T-cell (primary cell): ENCODE measurements at regions of chr2 and their contacts with region 1.

Region 1: DNA sequence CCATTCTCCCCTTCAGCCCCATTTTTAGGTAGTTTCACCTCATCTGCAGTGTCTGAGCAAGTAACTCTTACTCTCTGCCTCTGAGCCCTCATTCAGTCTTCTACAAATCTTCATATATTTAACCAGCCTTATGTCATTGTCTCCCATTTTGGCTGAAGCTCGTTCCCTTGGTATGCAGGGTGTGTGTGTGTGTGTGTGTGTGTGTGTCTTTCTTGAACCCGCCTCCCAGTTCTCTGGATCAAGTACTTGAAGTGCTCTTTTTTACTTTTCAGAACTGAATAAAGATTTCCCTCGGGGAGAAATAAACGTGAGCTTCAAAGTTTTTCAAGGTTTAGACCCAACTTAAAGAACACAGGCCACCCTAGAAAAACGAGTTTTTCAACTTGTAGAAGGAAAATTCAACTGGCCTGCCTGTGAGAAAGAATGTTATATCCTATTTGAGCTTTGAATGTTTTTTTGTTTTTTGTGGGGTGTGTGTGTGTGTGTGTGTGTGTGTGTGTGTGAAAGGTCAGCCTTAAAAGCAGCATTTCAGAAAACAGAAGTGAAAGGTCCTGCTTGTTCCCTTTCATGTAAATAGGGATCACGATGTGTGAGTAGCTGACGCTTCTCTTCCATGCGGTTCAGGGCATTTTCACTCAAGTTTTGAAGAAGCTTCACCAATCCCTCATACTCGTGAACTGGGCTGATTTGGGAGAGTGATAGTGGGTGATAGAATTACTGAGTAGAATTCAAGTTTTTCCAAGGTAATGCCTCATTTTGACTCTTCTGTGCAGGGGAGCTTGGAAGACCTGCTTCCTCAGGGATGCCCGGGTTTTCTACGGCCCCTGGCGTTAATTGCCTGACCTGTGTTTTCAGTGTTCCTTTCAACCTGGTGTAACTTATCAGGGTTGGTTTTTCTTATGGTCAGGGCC is 50.6 kb upstream of the EML6 start:
- DNase-seq: no peak
- ATAC-seq: no peak
- H3K4me3 ChIP-seq: no peak overlapping the region
- H3K4me3 Mint-ChIP-seq: peak overlapping the region in 1 of 3 donors; percentile 22
- H3K27ac ChIP-seq: no peak overlapping the region
- H3K27ac Mint-ChIP-seq: no peak overlapping the region
- H3K4me1 ChIP-seq: peaks cover 3 to 9% of the 10 kb centered on the region in 2 experiments
- H3K4me1 Mint-ChIP-seq: peaks cover 18 to 22% (median 18%) of the 10 kb centered on the region in 3 donors
- H3K27me3 ChIP-seq: peaks cover 0 to 9% of the 10 kb centered on the region in 2 experiments
- H3K27me3 Mint-ChIP-seq: no peaks in the 10 kb centered on the region

Region 2: GRCh38 chr2:54558188-54559005 is 114.4 kb before region 1 on chr2:
- CTCF ChIA-PET with region 1: no interaction called
- POLR2A ChIA-PET with region 1: interaction called in 1 of 2 experiments, 12 read pairs
- DNase-seq: peak; percentile 32 to 82 (median 65)
- ATAC-seq: peak; percentile 68 to 72 (median 72)
- H3K4me3 ChIP-seq: peak overlapping the region; percentile 77 to 88
- H3K4me3 Mint-ChIP-seq: peak overlapping the region; percentile 93 to 98 (median 95)
- H3K27ac ChIP-seq: peak overlapping the region; percentile 84
- H3K27ac Mint-ChIP-seq: peak overlapping the region; percentile 91
- H3K4me1 ChIP-seq: peaks cover 29% of the 10 kb centered on the region in 2 experiments
- H3K4me1 Mint-ChIP-seq: peaks cover 46 to 72% (median 56%) of the 10 kb centered on the region in 3 donors
- H3K27me3 ChIP-seq: no peaks in the 10 kb centered on the region
- H3K27me3 Mint-ChIP-seq: no peaks in the 10 kb centered on the region

Region 3: DNA sequence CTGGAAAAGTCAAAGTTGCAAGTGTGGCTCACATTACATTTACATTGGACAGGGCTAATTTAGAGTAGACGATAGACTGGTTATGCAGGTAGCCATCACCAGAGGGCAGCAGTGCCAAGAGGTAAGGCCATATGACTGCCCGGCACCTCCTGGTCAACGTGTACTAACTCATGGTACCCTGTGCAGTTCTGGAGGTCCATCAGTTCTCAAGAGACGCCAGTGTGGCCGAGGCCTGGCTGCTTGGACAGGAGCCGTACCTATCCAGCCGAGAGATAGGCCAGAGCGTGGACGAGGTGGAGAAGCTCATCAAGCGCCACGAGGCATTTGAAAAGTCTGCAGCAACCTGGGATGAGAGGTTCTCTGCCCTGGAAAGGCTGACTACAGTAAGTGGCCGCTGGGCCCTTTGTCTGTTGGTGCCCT is 15.2 kb before region 1 on chr2:
- CTCF ChIA-PET with region 1: no interaction called
- POLR2A ChIA-PET with region 1: no interaction called
- DNase-seq: peak in 10 of 35 experiments; percentile 8 to 41 (median 14)
- ATAC-seq: peak in 1 of 4 experiments; percentile 51
- H3K4me3 ChIP-seq: no peak overlapping the region
- H3K4me3 Mint-ChIP-seq: no peak overlapping the region
- H3K27ac ChIP-seq: no peak overlapping the region
- H3K27ac Mint-ChIP-seq: peak overlapping the region; percentile 59 to 65
- H3K4me1 ChIP-seq: no peaks in the 10 kb centered on the region
- H3K4me1 Mint-ChIP-seq: peaks cover 0 to 2% (median under 1%) of the 10 kb centered on the region in 3 donors
- H3K27me3 ChIP-seq: no peaks in the 10 kb centered on the region
- H3K27me3 Mint-ChIP-seq: no peaks in the 10 kb centered on the region

Region 4: GRCh38 chr2:54691445-54692135 is 18.7 kb after region 1 on chr2:
- CTCF ChIA-PET with region 1: no interaction called
- POLR2A ChIA-PET with region 1: no interaction called
- DNase-seq: no peak
- ATAC-seq: no peak
- H3K4me3 ChIP-seq: no peak overlapping the region
- H3K4me3 Mint-ChIP-seq: no peak overlapping the region
- H3K27ac ChIP-seq: no peak overlapping the region
- H3K27ac Mint-ChIP-seq: no peak overlapping the region
- H3K4me1 ChIP-seq: peaks cover 0 to 2% of the 10 kb centered on the region in 2 experiments
- H3K4me1 Mint-ChIP-seq: peaks cover 0 to 2% (median 0%) of the 10 kb centered on the region in 3 donors
- H3K27me3 ChIP-seq: peaks cover 0 to 3% of the 10 kb centered on the region in 2 experiments
- H3K27me3 Mint-ChIP-seq: peaks cover 0 to 4% of the 10 kb centered on the region in 2 donors

Region 5: DNA sequence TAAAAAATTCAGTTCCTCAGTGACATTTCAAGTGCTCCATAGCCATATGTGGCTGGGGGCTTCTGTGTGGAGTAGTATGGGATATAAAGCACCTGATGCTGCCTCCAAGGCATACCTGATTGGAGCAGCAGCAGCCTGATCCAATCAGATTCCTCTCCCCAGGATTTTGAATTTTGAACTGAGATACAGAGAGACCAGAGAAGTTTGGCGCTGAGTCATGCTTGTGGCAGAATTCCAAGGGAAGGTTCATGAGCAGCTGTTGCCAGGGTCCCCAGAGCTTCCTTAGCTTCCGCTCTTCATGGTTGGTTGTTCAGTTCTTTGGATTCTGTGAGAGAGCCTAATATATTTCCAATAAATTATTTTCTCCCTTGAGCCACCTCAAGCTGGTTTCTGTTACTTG is 817.7 kb after region 1 on chr2:
- CTCF ChIA-PET with region 1: no interaction called
- POLR2A ChIA-PET with region 1: no interaction called
- DNase-seq: no peak
- ATAC-seq: no peak
- H3K4me3 ChIP-seq: no peak overlapping the region
- H3K4me3 Mint-ChIP-seq: no peak overlapping the region
- H3K27ac ChIP-seq: no peak overlapping the region
- H3K27ac Mint-ChIP-seq: no peak overlapping the region
- H3K4me1 ChIP-seq: no peaks in the 10 kb centered on the region
- H3K4me1 Mint-ChIP-seq: no peaks in the 10 kb centered on the region
- H3K27me3 ChIP-seq: no peaks in the 10 kb centered on the region
- H3K27me3 Mint-ChIP-seq: peaks cover 8 to 9% of the 10 kb centered on the region in 2 donors